ENCODE measurements at regions of chr5 and their contacts with region 1.

Region 1: DNA sequence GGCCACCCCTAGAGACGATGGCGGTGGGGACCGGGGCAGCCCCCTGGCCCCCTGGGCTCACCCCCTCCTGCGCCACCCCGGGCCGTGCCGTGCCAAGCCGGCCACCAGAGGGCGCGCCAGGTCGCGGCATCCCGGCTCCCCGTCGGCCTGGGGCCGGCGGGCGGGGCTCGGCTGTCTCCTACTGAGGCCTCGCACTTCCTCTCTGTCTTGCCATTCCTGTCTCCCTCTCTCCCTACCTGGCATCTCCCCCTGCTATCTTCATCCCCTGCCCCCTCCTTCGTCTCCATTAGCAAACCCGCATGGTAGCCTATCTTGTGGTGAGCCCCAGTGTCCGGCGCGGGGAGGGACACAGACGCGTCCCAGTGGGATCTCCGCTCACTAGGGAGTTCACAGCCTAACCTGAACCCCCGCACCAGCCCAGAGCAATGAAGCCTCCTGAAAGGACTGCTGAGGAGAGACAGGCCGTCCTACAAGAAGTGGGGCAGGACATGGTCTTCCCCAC is 29.8 kb upstream of the FABP6 start:
- DNase-seq: peak; percentile 59
- H3K4me3 Mint-ChIP-seq: peak overlapping the region; percentile 66
- H3K27ac Mint-ChIP-seq: no peak overlapping the region
- H3K4me1 Mint-ChIP-seq: peaks cover 3% of the 10 kb centered on the region
- H3K27me3 Mint-ChIP-seq: peaks cover 8% of the 10 kb centered on the region

Region 2: GRCh38 chr5:159905496-159905895 is 294.0 kb before region 1 on chr5:
- intact Hi-C with region 1: no loop called
- DNase-seq: no peak
- H3K4me3 Mint-ChIP-seq: no peak overlapping the region
- H3K27ac Mint-ChIP-seq: no peak overlapping the region
- H3K4me1 Mint-ChIP-seq: peaks cover 12% of the 10 kb centered on the region
- H3K27me3 Mint-ChIP-seq: peaks cover 15% of the 10 kb centered on the region

Region 3: DNA sequence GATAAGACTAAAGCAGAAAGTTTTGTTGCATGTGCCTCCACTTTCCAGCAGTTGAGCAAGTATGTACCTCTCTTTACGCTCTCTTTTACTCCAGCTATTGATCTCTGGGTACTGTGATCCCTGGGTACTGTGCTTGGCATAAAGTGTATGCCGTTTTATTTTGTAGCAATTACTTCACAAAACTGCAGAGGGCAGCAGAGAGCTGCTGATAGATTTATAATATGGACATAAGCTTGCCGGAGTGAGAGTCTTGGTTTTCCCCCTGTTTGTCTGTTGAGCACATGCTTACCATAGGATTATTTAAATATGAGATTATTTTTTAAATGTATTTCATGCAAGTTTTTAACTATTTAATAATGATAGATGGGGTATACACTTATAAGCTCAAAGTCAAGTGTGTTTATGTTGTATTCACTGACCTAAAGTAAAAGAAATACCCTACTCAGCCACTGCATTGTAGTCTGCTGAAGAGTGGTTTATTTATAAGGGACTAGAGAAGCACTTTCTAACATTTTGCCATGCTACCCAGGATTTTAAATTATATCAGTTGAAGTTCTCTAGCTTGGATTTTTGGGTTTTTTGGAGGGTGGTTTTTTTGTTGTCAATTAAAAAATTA is 177.5 kb before region 1 on chr5:
- intact Hi-C with region 1: loop called (anchors 2 kb)
- DNase-seq: peak; percentile 36
- H3K4me3 Mint-ChIP-seq: no peak overlapping the region
- H3K27ac Mint-ChIP-seq: no peak overlapping the region
- H3K4me1 Mint-ChIP-seq: peaks cover 17% of the 10 kb centered on the region
- H3K27me3 Mint-ChIP-seq: no peaks in the 10 kb centered on the region

Region 4: GRCh38 chr5:160390787-160391696 is 191.6 kb after region 1 on chr5:
- intact Hi-C with region 1: loop called (anchors 1 kb)
- DNase-seq: no peak
- H3K4me3 Mint-ChIP-seq: no peak overlapping the region
- H3K27ac Mint-ChIP-seq: no peak overlapping the region
- H3K4me1 Mint-ChIP-seq: no peaks in the 10 kb centered on the region
- H3K27me3 Mint-ChIP-seq: peaks cover 2% of the 10 kb centered on the region

Measured in activated T-helper 2 cell treated with anti-CD3 and anti-CD28 coated beads, Interferon-gamma antibody, Interleukin-2, Interleukin-4, amounts not matched to agents 10 μg/mL and 5 μg/mL and 100 μg/mL, durations not matched to agents 14 hours and 24 hours and 36 hours (primary cell).